Calu3 (cell line): ENCODE measurements at regions of chr12 and their contacts with region 1.

Region 1: DNA sequence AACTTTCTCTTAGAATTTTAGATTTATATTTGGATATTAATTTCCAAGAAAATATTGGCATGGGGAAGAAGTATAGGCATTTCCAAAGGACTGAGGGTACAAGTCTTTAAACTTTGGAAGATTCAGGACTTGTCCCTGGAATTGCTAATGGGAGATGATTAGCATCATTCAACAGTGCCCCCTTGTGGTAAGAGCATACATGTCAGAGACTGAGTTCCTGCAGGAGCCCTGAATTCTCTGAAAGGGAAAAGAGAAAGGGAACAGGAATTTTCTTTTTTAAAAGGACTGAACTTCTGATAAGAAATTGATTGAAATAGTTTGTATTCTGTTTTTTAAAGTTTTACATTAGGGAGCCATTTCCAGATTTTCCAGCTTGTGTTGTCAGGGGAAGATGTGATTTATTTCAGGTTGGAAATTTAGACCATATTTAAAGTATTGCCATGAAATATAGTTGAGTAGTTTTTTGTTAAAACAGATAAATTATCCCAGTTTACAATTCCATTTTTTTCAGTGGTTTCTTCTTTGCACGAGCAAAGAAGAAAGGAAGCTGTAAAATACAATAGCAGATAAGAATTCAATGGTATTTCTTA is 44.0 kb upstream of the REP15 start:
- DNase-seq: peak; percentile 72
- H3K4me3 Mint-ChIP-seq: no peak overlapping the region
- H3K27ac Mint-ChIP-seq: no peak overlapping the region
- H3K4me1 Mint-ChIP-seq: no peaks in the 10 kb centered on the region
- H3K27me3 Mint-ChIP-seq: no peaks in the 10 kb centered on the region
- CTCF ChIP-seq: peak; percentile 73

Region 2: DNA sequence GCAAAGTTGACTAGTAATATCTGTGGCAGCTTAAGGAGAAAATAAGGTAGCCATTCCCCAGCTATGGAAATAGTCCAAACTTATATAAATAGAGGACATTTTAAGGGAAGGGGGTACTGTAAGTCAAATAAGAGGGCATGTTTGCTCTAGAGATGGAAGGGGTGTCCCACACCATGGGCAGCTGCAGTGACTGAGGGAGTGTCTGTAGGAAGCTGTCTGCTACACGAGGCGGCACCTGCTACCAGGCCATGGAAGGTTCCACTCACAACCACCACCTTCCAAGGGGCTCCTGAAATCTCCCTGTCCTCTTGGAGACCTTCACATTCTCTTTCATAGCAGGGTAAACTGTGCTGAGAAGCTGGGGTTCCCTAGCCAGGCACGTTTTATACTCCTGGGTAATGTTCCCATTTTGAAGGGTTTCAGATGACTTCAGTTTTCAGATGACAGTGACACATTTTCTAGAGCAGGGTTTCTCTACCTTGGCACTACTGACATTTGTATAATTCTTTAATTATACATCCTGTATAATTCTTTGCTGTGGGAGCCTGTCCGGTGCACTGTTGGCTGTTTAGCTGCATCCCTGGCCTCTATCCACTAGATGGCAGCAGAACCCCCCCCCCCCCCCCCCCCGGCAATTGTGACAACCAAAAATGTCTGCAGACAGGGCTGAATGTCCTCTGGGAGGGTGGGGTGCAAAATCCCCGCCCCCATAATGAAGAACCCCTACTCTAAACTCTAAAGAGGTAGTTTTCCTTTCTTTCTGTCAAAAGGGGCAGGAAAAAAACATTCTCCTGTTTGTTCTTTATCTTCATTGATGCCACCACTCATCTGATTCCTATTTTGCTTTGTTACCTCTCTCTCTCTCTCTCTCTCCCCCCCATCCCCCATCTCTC is 217.3 kb before region 1 on chr12:
- CTCF ChIA-PET with region 1: interaction called, 3 read pairs
- intact Hi-C with region 1: loop called (anchors 5 kb)
- DNase-seq: no peak
- H3K4me3 Mint-ChIP-seq: no peak overlapping the region
- H3K27ac Mint-ChIP-seq: no peak overlapping the region
- H3K4me1 Mint-ChIP-seq: peaks cover 13% of the 10 kb centered on the region
- H3K27me3 Mint-ChIP-seq: no peaks in the 10 kb centered on the region
- CTCF ChIP-seq: peak; percentile 63